ENCODE measurements at regions of chr12 and their contacts with region 1.

Region 1: DNA sequence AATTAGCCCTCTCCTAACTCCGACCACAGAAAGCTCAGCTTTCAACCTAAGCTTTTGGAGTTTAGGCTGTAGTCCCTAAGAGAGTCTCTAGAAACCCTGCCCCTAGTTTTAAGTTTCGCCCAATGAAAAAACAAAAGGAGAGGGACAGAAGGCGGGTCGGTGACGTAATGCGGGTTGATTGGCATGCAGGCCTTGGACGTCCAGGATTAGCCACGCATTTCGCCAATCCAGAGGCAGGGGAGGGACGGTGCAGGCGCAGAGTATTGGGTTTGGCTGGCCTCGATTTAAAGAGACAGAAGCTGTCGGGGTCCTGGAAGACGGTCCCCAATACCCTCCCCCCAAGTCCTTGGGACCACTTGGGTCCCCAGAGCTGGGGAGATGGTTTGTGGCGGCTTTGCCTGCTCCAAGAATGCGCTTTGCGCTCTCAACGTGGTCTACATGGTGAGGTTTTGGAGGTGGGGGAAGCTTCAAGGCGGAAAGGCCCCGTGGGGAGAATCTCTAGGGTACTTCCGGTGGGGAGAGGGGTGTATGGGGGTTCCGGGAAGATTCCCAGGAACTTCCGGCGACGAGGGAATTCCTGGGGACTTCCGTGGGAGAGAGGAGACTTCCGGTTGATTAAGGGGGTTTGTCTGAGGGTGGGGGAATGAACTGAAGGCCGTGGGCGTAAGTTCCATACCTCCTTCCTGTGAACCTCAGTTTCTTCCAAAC is at the start of gene TSPAN31:
- DNase-seq: peak; percentile 97
- ATAC-seq: peak; percentile 90
- H3K4me3 ChIP-seq: peak within 1 kb of the TSS; percentile 63 to 80 (median 71)
- H3K27ac ChIP-seq: peak within 1 kb of the TSS; percentile 94
- H3K4me1 ChIP-seq: peaks cover 37% of the 10 kb centered on the region
- H3K27me3 ChIP-seq: peaks cover 0 to 10% of the 10 kb centered on the region in 2 experiments; a peak in 3 of 5 replicates
- CTCF ChIP-seq: no peak
- EP300 ChIP-seq: no peak
- POLR2A ChIP-seq: peak; percentile 57 to 66
- RAD21 ChIP-seq: no peak
- total RNA-seq, gene TSPAN31: 5.4 and 10.4 TPM in 2 replicates

Region 2: GRCh38 chr12:57726151-57726883 is 18.6 kb before region 1 on chr12:
- CTCF ChIA-PET with region 1: no interaction called
- POLR2A ChIA-PET with region 1: interaction called, 23 read pairs
- in situ Hi-C with region 1: no loop called
- intact Hi-C with region 1: no loop called
- DNase-seq: peak; percentile 71
- ATAC-seq: peak; percentile 93
- H3K4me3 ChIP-seq: peak overlapping the region; percentile 81 to 91 (median 89)
- H3K27ac ChIP-seq: no peak overlapping the region
- H3K4me1 ChIP-seq: 0 out of 2 replicates have a peak, but pooled peaks cover 4% of the 10 kb centered on the region
- H3K27me3 ChIP-seq: peaks cover 2 to 18% of the 10 kb centered on the region in 2 experiments; a peak in 3 of 5 replicates
- CTCF ChIP-seq: peak; percentile 94
- EP300 ChIP-seq: no peak
- POLR2A ChIP-seq: no peak
- RAD21 ChIP-seq: peak; percentile 67

Measured in HepG2 (cell line).